Naive thymus-derived CD8-positive, alpha-beta T cell (primary cell): ENCODE measurements at regions of chr11 and their contacts with region 1.

Region 1: DNA sequence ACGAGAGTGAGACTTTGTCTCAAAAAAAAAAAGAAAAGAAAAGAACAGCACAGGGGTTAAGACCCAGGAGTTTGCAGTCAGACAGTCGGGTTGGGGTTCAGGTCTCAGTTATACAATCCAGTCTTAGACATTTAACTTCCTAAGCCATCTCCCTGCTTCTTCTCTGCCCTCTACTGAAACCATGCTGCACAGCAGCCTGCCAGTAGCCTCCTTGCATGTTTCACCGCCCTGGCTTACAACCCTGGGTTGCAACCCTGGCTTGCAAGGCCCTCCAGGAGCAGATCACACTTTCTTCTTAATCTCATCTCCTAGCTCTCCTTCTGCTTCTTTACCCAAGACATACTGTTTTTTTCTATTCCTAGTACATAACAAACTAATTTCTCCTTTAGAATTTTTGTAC is 5.9 kb upstream of the B3GAT3 start:
- DNase-seq: no peak
- ATAC-seq: peak; percentile 34 to 48
- H3K4me3 Mint-ChIP-seq: no peak overlapping the region
- H3K27ac Mint-ChIP-seq: peak overlapping the region in 8 of 10 donors; percentile 24 to 85 (median 54)
- H3K4me1 Mint-ChIP-seq: peaks cover 0 to 15% (median 6%) of the 10 kb centered on the region in 4 donors
- H3K27me3 Mint-ChIP-seq: no peaks in the 10 kb centered on the region

Region 2: GRCh38 chr11:62427630-62428233 is 200.0 kb before region 1 on chr11:
- POLR2A ChIA-PET with region 1: no interaction called
- DNase-seq: no peak
- ATAC-seq: no peak
- H3K4me3 Mint-ChIP-seq: peak overlapping the region in 2 of 10 donors; percentile 26 to 63
- H3K27ac Mint-ChIP-seq: peak overlapping the region in 8 of 10 donors; percentile 53 to 90 (median 78)
- H3K4me1 Mint-ChIP-seq: peaks cover 11 to 48% (median 39%) of the 10 kb centered on the region in 4 donors
- H3K27me3 Mint-ChIP-seq: no peaks in the 10 kb centered on the region

Region 3: DNA sequence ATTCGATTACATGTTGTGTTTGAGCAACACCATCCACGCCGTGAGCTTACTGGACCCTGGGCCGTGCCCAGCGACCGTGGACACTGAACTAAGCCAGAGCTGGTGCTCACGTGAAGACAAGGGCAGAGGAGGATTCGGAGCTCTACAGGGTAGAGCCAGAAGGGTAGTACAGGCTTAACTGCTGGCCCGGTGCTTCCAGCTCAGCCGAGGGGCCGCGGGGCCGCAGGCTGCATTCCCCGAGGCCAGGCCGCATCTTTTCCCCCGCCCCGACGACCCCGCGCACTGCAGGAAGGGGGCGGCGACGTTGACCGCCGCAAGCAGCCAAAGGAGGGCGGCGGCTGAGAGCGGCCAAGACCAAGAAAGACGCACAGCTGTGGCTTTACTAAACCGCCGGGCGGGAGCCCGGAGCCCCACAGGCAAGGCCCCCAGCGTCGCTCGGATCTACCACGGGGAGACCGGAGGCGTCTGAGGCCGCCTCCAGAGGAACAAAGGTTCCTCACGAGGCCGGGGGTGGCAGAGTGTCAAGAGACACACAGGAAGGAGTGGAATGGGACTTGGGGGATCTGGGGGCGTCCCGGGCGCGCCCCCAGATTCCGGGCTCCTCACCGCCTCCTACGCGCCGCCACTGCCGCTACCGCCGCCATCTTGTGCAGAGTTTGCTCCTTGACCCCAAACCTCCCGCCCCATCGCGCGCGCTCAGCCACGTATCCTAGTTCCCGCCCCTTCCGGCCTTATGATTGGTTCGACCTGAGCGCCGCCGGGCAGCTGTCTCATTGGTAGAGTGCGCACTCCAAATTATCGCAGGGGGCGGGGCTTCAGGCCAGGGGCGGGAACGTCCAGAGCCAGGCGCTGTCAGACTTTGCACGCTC is 18.5 kb after region 1 on chr11 and contains the start of gene GANAB:
- POLR2A ChIA-PET with region 1: interaction called, 70 read pairs
- DNase-seq: peak; percentile 94 to 99 (median 97)
- ATAC-seq: peak; percentile 97 to 98
- H3K4me3 Mint-ChIP-seq: peak within 1 kb of the TSS; percentile 92 to 99 (median 97)
- H3K27ac Mint-ChIP-seq: peak within 1 kb of the TSS; percentile 90 to 99 (median 98)
- H3K4me1 Mint-ChIP-seq: peaks cover 9 to 50% (median 32%) of the 10 kb centered on the region in 4 donors
- H3K27me3 Mint-ChIP-seq: no peaks in the 10 kb centered on the region
- polyA plus RNA-seq, gene GANAB: 171 to 197 (median 174) TPM

Region 4: DNA sequence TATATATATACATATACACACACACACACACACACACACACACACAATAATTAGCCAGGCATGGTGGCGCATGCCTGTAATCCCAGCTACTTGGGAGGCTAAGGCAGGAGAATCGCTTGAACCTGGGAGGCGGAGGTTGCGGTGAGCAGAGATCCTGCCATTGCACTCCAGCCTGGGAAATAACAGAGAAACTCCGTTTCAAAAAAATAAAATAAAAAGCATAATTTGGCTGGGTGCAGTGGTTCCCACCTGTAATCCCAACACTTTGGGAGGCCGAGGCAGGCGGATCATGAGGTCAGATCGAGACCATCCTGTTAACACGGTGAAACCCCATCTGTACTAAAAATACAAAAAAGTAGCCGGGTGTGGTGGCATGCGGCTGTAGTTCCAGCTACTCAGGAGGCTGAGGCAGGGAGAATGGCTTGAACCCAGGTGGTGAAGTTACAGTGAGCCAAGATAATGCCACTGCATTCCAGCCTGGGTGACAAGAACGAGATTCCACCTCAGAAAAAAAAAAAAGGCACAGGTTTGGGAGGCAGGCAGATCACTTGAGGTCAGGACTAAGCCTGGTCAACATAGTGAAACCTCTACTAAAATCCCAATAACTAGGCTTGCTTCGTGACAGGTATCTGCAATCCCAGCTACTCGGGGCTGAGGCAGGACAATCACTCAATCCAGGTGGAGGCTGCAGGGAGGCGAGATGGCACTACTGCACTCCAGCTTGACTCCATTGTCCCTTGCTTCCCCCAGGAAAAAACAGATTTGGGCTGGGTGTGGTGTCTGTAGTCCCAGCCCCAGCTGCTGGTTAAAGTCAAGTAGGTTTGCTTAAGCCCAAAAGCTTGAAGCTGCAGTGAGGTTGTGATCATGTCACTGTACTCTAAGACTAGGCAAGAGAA is 223.4 kb after region 1 on chr11:
- POLR2A ChIA-PET with region 1: no interaction called
- DNase-seq: no peak
- ATAC-seq: no peak
- H3K4me3 Mint-ChIP-seq: peak overlapping the region in 6 of 10 donors; percentile 2 to 69 (median 38)
- H3K27ac Mint-ChIP-seq: peak overlapping the region in 9 of 10 donors; percentile 13 to 88 (median 84)
- H3K4me1 Mint-ChIP-seq: peaks cover 30 to 59% (median 48%) of the 10 kb centered on the region in 4 donors
- H3K27me3 Mint-ChIP-seq: peaks cover 0 to 4% (median 0%) of the 10 kb centered on the region in 5 donors